ENCODE measurements at regions of chr6 and their contacts with region 1.

Region 1: DNA sequence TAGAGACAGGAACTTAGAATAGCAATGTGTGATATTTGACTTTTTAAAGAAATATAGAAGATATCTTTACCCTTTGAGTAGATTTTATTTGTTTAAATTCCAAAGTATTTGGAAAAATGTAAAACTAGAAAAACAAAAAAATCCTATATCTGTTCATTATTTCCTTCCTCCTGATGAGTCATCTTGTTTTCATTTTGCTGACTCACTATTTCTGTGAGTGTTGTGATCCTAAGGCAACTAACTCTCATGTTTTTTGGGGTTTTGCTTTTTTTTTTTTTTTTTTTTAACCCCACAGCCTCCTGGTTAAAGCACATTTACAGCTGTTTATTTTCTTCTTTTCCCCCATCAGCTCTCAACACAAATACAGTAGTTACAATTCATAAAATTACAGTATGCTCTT is 37.8 kb upstream of the THEMIS start:
- DNase-seq: no peak
- H3K4me3 Mint-ChIP-seq: no peak overlapping the region
- H3K27ac Mint-ChIP-seq: no peak overlapping the region
- H3K4me1 Mint-ChIP-seq: peaks cover 60% of the 10 kb centered on the region
- H3K27me3 Mint-ChIP-seq: no peaks in the 10 kb centered on the region

Region 2: GRCh38 chr6:127900935-127901334 is 37.8 kb before region 1 on chr6 and contains the start of gene THEMIS:
- CTCF ChIA-PET with region 1: interaction called, 9 read pairs
- intact Hi-C with region 1: loop called (anchors 1 kb)
- DNase-seq: peak; percentile 52
- H3K4me3 Mint-ChIP-seq: peak within 1 kb of the TSS; percentile 81
- H3K27ac Mint-ChIP-seq: peak within 1 kb of the TSS; percentile 94
- H3K4me1 Mint-ChIP-seq: peaks cover 57% of the 10 kb centered on the region
- H3K27me3 Mint-ChIP-seq: no peaks in the 10 kb centered on the region
- total RNA-seq, gene THEMIS: 7.0 to 7.4 TPM

Region 3: DNA sequence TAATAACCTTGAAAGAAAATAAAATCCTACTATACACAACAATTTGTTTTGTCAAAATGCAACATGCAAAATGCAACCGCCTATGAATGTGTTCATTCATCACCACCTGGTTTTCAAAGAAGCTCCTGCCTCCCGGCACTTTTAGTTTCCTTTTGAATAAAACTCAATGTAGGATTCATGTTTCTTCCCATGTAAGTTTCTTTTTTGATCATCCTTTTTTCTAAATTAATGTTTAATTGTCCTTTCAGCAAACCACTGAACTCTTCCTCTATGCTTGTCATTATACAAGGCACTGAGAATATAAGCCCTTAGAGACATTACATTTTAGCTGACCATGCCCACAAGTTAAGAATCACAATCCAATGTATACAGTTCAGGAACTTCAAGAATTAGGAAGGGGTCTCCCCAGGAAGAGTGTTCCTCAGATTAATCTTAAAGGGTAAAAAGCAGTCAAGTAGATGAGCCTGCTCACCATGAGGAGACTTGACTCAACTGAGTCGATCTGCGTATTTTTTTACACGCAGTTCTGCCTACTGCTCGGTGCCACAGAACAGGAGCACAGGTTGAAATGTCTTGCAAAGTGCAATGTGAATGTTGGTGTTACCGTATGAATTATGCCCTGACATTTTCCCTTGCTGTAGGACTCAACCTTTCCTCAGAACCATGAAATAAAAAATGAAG is 30.6 kb before region 1 on chr6:
- CTCF ChIA-PET with region 1: no interaction called
- intact Hi-C with region 1: loop called (anchors 1 kb)
- DNase-seq: peak; percentile 60
- H3K4me3 Mint-ChIP-seq: peak overlapping the region; percentile 51
- H3K27ac Mint-ChIP-seq: peak overlapping the region; percentile 77
- H3K4me1 Mint-ChIP-seq: peaks cover 42% of the 10 kb centered on the region
- H3K27me3 Mint-ChIP-seq: no peaks in the 10 kb centered on the region

Region 4: DNA sequence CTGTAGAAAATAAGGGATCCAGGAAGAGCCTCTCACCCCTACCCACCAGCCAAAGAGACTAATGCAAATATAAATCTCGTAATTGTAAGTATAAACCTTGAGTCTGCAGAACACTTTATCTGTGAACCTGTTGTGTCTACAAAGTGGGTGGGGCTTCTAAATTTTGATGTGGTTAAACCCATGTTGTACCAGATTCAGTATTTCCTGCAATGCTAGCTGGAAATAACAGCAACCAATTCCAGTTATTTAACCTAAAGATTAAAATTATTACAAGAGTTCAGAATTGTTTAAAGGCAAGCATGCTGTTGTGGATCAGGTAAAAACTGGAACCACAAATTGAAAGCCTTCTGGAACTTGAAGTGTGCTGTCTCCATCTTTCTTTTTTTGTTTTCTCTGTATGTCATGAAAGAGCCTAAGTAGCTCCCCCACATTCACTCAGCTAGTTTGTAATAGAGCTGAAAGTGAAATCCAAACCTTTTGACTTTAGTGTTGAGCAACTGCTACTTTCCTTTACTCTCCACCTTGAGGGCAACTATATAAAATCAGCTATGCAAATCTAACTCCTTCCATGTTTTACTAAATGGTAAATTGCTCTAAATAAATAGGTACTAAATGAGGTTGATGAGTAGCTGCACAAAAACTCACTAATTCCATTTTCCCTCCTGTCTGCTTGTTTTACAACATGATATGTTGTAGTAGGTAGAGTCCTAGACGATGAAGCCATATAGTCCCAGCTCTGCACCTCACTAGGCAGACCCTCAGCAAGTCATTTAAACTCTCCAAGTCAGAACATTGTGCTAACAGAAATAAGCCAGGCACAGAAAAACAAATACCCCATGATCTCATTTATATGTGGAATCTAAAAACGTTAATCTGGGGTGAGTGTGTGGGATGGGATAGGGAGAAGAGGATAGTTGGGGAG is 19.9 kb before region 1 on chr6:
- CTCF ChIA-PET with region 1: interaction called, 6 read pairs
- intact Hi-C with region 1: loop called (anchors 2 kb)
- DNase-seq: no peak
- H3K4me3 Mint-ChIP-seq: peak overlapping the region; percentile 32
- H3K27ac Mint-ChIP-seq: peak overlapping the region; percentile 31
- H3K4me1 Mint-ChIP-seq: peaks cover 80% of the 10 kb centered on the region
- H3K27me3 Mint-ChIP-seq: no peaks in the 10 kb centered on the region

Region 5: GRCh38 chr6:127924440-127924839 is 14.3 kb before region 1 on chr6:
- CTCF ChIA-PET with region 1: interaction called, 6 read pairs
- intact Hi-C with region 1: loop called (anchors 1 kb)
- DNase-seq: peak; percentile 40
- H3K4me3 Mint-ChIP-seq: peak overlapping the region; percentile 5
- H3K27ac Mint-ChIP-seq: peak overlapping the region; percentile 61
- H3K4me1 Mint-ChIP-seq: peaks cover 59% of the 10 kb centered on the region
- H3K27me3 Mint-ChIP-seq: no peaks in the 10 kb centered on the region

Region 6: GRCh38 chr6:127951172-127951917 is 12.6 kb after region 1 on chr6:
- CTCF ChIA-PET with region 1: interaction called, 3 read pairs
- intact Hi-C with region 1: loop called (anchors 1 kb)
- DNase-seq: no peak
- H3K4me3 Mint-ChIP-seq: peak overlapping the region; percentile 37
- H3K27ac Mint-ChIP-seq: peak overlapping the region; percentile 66
- H3K4me1 Mint-ChIP-seq: peaks cover 62% of the 10 kb centered on the region
- H3K27me3 Mint-ChIP-seq: no peaks in the 10 kb centered on the region